ENCODE measurements at regions of chr11 and their contacts with region 1.

Region 1: DNA sequence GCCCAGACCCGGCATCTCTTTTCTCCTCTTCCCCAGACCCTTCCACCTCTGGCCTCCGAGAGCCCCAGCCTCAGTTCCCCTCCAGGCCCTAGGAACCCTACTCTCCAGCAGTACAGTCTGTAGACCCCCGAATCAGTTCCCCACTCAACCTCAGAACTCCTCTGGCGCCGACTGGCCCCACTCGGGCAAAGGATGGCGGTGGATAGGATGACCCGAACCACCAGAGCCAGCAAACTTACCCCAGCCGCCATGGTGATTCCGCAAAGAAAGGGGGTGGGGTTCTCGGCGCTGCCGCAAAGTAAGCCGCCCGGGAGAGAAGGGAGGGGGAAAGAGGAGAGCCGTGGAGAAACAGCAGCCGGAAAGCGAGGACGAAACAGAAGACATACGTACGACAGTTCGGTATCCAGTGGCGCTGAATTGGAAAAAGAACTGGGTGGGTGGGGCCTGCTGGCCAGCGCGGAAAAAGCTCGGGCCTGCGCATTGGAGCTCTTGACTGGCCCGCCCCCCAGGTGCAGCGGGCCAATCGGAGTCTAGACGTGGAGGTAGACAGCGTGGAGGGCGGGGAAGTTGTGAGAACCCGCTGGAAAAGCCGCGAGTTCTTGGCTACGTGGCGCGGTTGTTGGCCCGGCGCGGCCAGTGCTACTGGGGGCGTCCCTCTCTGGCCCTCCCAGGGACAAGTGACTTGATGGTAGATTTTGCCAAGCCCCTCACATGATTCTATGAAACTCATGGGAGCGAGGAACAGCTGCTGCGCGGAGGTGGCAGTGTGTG is at the start of gene EEF1G:
- DNase-seq: peak; percentile 100
- ATAC-seq: peak; percentile 87
- H3K4me3 ChIP-seq: peak within 1 kb of the TSS; percentile 94
- H3K27ac ChIP-seq: peak within 1 kb of the TSS; percentile 74
- H3K4me1 ChIP-seq: peaks cover 36% of the 10 kb centered on the region
- H3K27me3 ChIP-seq: no peaks in the 10 kb centered on the region
- CTCF ChIP-seq: no peak
- total RNA-seq, gene EEF1G: 1,577 and 1,815 TPM in 2 replicates

Region 2: DNA sequence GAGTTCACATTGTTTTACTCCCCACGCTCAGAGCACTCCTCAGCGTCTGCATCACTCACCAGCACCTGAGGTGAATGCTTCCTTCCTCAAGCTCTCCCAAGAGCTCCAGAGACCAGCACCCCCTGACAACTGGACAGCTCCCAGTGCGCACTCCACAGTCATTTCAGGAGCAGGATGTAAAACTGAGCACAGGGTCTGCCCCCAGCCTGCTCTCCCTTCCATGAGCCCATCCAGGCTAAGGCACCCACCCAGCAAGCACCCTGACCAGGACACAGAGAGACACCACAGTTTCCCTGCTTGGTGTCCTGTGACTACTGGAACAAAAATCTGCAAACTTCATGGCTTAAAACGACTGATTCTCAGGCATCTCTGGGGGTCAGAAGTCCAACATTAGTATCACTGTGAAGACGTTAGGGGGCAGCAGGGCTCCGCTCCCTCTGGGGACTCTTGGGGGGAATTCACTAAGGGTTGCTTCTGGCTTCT is 328.5 kb before region 1 on chr11:
- CTCF ChIA-PET with region 1: no interaction called
- POLR2A ChIA-PET with region 1: interaction called, 11 read pairs
- intact Hi-C with region 1: no loop called
- DNase-seq: peak; percentile 63
- ATAC-seq: peak; percentile 42
- H3K4me3 ChIP-seq: no peak overlapping the region
- H3K27ac ChIP-seq: no peak overlapping the region
- H3K4me1 ChIP-seq: peaks cover 11% of the 10 kb centered on the region
- H3K27me3 ChIP-seq: 0 out of 2 replicates have a peak, but pooled peaks cover 6% of the 10 kb centered on the region
- CTCF ChIP-seq: peak; percentile 40; the same call in 1 of the 2 replicates

Region 3: GRCh38 chr11:62614275-62614674 is 40.5 kb after region 1 on chr11:
- CTCF ChIA-PET with region 1: no interaction called
- POLR2A ChIA-PET with region 1: no interaction called
- intact Hi-C with region 1: no loop called
- DNase-seq: peak; percentile 72
- ATAC-seq: peak; percentile 10
- H3K4me3 ChIP-seq: no peak overlapping the region
- H3K27ac ChIP-seq: peak overlapping the region; percentile 9; the same call in 1 of the 2 replicates
- H3K4me1 ChIP-seq: peaks cover 29% of the 10 kb centered on the region
- H3K27me3 ChIP-seq: no peaks in the 10 kb centered on the region
- CTCF ChIP-seq: no peak